ENCODE measurements at regions of chr10 and their contacts with region 1.

Region 1: GRCh38 chr10:104045151-104046089 is 40.3 kb downstream of the COL17A1 start:
- DNase-seq: peak; percentile 71 to 77
- H3K4me3 ChIP-seq: no peak overlapping the region
- H3K4me3 Mint-ChIP-seq: no peak overlapping the region
- H3K27ac Mint-ChIP-seq: peak overlapping the region; percentile 48
- H3K4me1 ChIP-seq: no peaks in the 10 kb centered on the region; the same call in 1 of the 2 replicates
- H3K4me1 Mint-ChIP-seq: no peaks in the 10 kb centered on the region
- H3K27me3 ChIP-seq: no peaks in the 10 kb centered on the region
- H3K27me3 Mint-ChIP-seq: no peaks in the 10 kb centered on the region
- CTCF ChIP-seq: peak; percentile 63 to 95

Region 2: DNA sequence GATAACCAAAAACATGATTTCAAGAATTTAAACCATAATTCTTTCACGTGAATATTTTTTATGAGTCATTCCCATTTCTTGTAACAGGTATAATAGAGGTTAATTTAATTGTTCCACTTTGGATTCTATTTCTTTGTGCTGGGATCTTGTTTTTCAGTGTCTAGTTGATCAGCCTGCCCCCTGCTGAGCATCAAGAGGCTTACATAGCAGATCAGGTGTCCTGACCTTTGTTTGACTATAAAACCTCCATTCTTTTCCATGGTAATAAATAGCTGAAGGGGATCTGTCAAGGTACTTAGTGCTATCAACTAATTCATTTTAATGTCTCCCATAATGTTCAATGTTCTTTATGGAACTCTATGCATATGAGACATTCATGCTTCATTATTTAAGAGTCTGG is 35.3 kb after region 1 on chr10:
- CTCF ChIA-PET with region 1: no interaction called
- POLR2A ChIA-PET with region 1: no interaction called
- intact Hi-C with region 1: loop called (anchors 1 kb)
- DNase-seq: peak in 1 of 2 experiments; percentile 26
- H3K4me3 ChIP-seq: no peak overlapping the region
- H3K4me3 Mint-ChIP-seq: no peak overlapping the region
- H3K27ac Mint-ChIP-seq: no peak overlapping the region
- H3K4me1 ChIP-seq: peaks cover 7% of the 10 kb centered on the region
- H3K4me1 Mint-ChIP-seq: peaks cover 14% of the 10 kb centered on the region
- H3K27me3 ChIP-seq: no peaks in the 10 kb centered on the region
- H3K27me3 Mint-ChIP-seq: no peaks in the 10 kb centered on the region
- CTCF ChIP-seq: peak; percentile 53 to 65

Region 3: GRCh38 chr10:104209575-104210198 is 164.3 kb after region 1 on chr10:
- CTCF ChIA-PET with region 1: no interaction called
- POLR2A ChIA-PET with region 1: no interaction called
- intact Hi-C with region 1: loop called (anchors 1 kb)
- DNase-seq: peak in 1 of 2 experiments; percentile 54
- H3K4me3 ChIP-seq: no peak overlapping the region
- H3K4me3 Mint-ChIP-seq: no peak overlapping the region
- H3K27ac Mint-ChIP-seq: no peak overlapping the region
- H3K4me1 ChIP-seq: no peaks in the 10 kb centered on the region
- H3K4me1 Mint-ChIP-seq: no peaks in the 10 kb centered on the region
- H3K27me3 ChIP-seq: no peaks in the 10 kb centered on the region
- H3K27me3 Mint-ChIP-seq: no peaks in the 10 kb centered on the region
- CTCF ChIP-seq: peak; percentile 75 to 76

Region 4: DNA sequence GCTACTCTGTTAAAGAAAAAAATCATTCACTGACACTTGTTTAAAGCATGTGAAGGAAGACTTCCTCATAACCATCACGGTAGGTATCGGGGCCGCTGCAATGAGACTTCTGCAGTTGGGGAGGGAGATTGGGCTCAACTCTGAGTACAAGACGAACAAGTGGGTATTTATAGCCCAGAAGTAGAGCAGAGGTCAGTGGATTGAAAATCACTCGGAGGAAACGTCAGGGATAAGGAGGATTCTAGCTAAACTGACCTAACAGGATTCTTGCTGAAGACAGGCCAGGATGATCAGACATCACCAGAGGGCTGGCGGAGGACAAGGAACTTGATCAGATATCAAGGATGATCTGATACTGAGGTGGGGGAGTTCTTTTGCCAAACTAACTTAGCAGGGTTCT is 259.5 kb after region 1 on chr10:
- CTCF ChIA-PET with region 1: no interaction called
- POLR2A ChIA-PET with region 1: no interaction called
- intact Hi-C with region 1: loop called (anchors 1 kb)
- DNase-seq: no peak
- H3K4me3 ChIP-seq: no peak overlapping the region
- H3K4me3 Mint-ChIP-seq: no peak overlapping the region
- H3K27ac Mint-ChIP-seq: no peak overlapping the region
- H3K4me1 ChIP-seq: no peaks in the 10 kb centered on the region
- H3K4me1 Mint-ChIP-seq: peaks cover 8% of the 10 kb centered on the region
- H3K27me3 ChIP-seq: no peaks in the 10 kb centered on the region
- H3K27me3 Mint-ChIP-seq: no peaks in the 10 kb centered on the region
- CTCF ChIP-seq: no peak

Region 5: GRCh38 chr10:104353325-104354048 is 308.1 kb after region 1 on chr10 and contains the start of gene CFAP58:
- CTCF ChIA-PET with region 1: no interaction called
- POLR2A ChIA-PET with region 1: no interaction called
- intact Hi-C with region 1: loop called (anchors 5 kb)
- DNase-seq: peak; percentile 93 to 94
- H3K4me3 ChIP-seq: peak within 1 kb of the TSS; percentile 27
- H3K4me3 Mint-ChIP-seq: no peak within 1 kb of the TSS
- H3K27ac Mint-ChIP-seq: no peak within 1 kb of the TSS
- H3K4me1 ChIP-seq: peaks cover 7% of the 10 kb centered on the region; the same call in 1 of the 2 replicates
- H3K4me1 Mint-ChIP-seq: no peaks in the 10 kb centered on the region
- H3K27me3 ChIP-seq: no peaks in the 10 kb centered on the region; the same call in 1 of the 2 replicates
- H3K27me3 Mint-ChIP-seq: peaks cover 9% of the 10 kb centered on the region
- CTCF ChIP-seq: peak; percentile 44 to 85
- total RNA-seq, gene CFAP58: not detected in 2 replicates